ENCODE measurements at regions of chr3 and their contacts with region 1.

Region 1: GRCh38 chr3:112379020-112379690 is 46.2 kb downstream of the CD200 start:
- DNase-seq: peak; percentile 97
- H3K4me3 ChIP-seq: no peak overlapping the region
- H3K27ac ChIP-seq: peak overlapping the region; percentile 95
- H3K4me1 ChIP-seq: peaks cover 28% of the 10 kb centered on the region
- H3K27me3 ChIP-seq: no peaks in the 10 kb centered on the region
- CTCF ChIP-seq: no peak

Region 2: DNA sequence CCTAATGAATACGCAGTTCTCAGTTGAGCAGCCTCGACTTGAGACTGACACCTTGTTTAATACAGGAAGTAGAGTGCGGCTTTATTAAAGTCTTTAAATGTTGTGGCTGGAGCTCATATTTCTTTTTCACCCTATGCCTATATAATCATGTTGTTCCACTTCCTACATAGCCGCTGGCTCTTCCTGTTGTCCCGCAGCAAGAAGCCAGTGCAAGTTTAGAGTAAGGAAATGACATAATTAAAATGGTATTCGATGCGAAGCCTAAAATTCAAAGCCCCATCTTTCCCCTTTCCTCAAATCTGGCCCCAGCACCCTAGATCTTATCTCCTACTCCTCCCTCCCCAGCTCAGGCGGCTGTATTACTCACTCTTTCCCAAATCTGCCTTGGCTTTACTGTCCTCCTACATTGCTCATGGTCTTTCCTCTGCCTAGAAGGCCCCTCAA is 527.6 kb before region 1 on chr3:
- CTCF ChIA-PET with region 1: no interaction called
- dilution Hi-C with region 1: no loop called
- in situ Hi-C with region 1: no loop called
- intact Hi-C with region 1: no loop called
- DNase-seq: peak; percentile 68
- H3K4me3 ChIP-seq: no peak overlapping the region
- H3K27ac ChIP-seq: peak overlapping the region; percentile 72
- H3K4me1 ChIP-seq: peaks cover 43% of the 10 kb centered on the region
- H3K27me3 ChIP-seq: no peaks in the 10 kb centered on the region
- CTCF ChIP-seq: no peak

Region 3: GRCh38 chr3:112350181-112350825 is 28.9 kb before region 1 on chr3:
- CTCF ChIA-PET with region 1: no interaction called
- dilution Hi-C with region 1: no loop called
- in situ Hi-C with region 1: no loop called
- intact Hi-C with region 1: no loop called
- DNase-seq: no peak
- H3K4me3 ChIP-seq: no peak overlapping the region
- H3K27ac ChIP-seq: no peak overlapping the region
- H3K4me1 ChIP-seq: peaks cover 5% of the 10 kb centered on the region
- H3K27me3 ChIP-seq: no peaks in the 10 kb centered on the region
- CTCF ChIP-seq: no peak

Region 4: DNA sequence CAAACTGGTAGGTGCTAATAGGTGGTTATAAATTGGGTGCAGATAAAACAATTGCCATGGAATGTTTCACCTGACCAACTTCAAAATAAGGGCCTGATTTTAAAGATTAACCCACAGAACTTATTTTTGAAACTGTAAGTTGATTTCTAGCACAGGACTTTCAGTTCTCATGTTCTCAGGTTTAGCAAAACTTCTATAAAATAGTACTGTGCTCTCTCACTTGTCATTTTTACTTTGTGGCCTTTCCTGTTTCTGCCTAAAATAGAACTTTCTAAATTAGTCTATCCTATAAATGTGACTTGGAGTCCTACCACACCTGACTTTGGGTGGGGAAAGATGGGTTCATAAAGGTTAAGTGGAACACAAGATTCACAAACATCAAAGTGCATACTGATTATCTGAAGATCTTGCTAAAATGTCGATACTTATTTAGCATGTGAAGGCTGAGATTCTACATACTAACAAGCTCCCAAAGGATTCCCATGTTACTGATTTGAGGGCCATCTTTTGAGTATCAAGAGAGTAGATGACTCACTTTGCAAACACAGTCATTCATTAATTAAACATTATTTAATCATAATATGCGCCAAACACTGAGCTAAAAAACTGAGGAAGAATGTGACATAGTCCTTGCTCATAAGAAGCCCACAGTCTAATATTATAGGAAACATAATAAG is 81.5 kb after region 1 on chr3:
- CTCF ChIA-PET with region 1: no interaction called
- dilution Hi-C with region 1: no loop called
- in situ Hi-C with region 1: no loop called
- intact Hi-C with region 1: no loop called
- DNase-seq: no peak
- H3K4me3 ChIP-seq: no peak overlapping the region
- H3K27ac ChIP-seq: no peak overlapping the region
- H3K4me1 ChIP-seq: no peaks in the 10 kb centered on the region
- H3K27me3 ChIP-seq: peaks cover 5% of the 10 kb centered on the region
- CTCF ChIP-seq: no peak

Region 5: DNA sequence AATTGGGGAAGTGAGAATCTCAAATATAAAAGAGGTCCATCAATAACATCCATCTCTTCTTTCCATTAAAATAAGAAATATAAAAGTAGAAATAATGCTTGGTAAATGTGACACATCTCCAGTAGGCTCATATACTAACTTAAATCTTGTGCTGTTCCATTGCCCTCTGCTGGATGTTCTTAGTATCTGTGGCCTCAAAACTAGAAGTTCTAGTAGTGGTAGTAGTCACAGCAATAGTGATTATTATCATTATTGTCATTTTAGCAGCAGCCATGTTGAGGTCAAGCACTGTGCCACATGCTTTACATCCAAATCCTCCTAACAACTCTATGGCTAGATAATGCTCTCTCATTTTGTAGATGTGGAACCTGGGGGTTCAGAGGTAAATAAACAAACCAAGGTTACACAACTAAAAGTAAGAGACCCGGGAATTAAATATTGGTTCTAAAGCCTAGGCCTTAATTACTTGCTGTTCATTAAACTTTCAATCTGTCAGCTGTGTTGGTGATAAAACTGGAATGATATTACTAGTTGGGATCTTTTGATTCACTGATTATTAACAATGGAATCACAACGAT is 140.4 kb after region 1 on chr3:
- CTCF ChIA-PET with region 1: no interaction called
- dilution Hi-C with region 1: no loop called
- in situ Hi-C with region 1: no loop called
- intact Hi-C with region 1: no loop called
- DNase-seq: peak; percentile 58
- H3K4me3 ChIP-seq: no peak overlapping the region
- H3K27ac ChIP-seq: no peak overlapping the region
- H3K4me1 ChIP-seq: no peaks in the 10 kb centered on the region
- H3K27me3 ChIP-seq: no peaks in the 10 kb centered on the region
- CTCF ChIP-seq: peak; percentile 74 to 76

Region 6: GRCh38 chr3:112561731-112562688 is 182.9 kb after region 1 on chr3 and contains the starts of genes ATG3 and SLC35A5:
- CTCF ChIA-PET with region 1: no interaction called
- dilution Hi-C with region 1: no loop called
- in situ Hi-C with region 1: no loop called
- intact Hi-C with region 1: loop called (anchors 5 kb)
- DNase-seq: peak; percentile 99
- H3K4me3 ChIP-seq: peak within 1 kb of the TSS; percentile 76 to 91 (median 86)
- H3K27ac ChIP-seq: peak within 1 kb of the TSS; percentile 90
- H3K4me1 ChIP-seq: peaks cover 16% of the 10 kb centered on the region
- H3K27me3 ChIP-seq: no peaks in the 10 kb centered on the region
- CTCF ChIP-seq: peak in 1 of 2 donors; percentile 15
- total RNA-seq, gene ATG3: 51.3 to 65.2 TPM
- total RNA-seq, gene SLC35A5: 26.9 to 58.3 TPM